Panc1 (cell line): ENCODE measurements at regions of chr5 and their contacts with region 1.

Region 1: DNA sequence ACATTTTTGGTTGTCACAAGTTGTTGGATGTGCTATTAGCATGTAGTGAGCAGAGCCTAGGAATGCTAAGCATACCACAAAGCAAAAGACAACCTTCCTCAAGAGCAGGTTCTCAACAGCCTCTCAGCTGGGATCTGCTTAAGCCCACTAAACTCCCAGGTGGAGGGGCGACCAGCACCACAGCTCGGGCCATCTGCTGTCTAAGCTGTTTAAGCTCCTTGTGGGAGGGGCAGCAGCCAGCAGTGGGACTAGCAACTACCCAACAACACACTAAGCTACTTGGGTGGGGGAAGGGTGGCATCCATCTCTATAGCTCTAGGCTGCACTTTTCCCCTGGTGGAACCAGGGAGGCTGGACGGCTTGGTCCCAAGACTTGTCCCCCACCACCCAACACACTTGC is 1052.7 kb upstream of the ARRDC3 start:
- DNase-seq: no peak
- ATAC-seq: no peak
- H3K4me3 ChIP-seq: no peak overlapping the region
- H3K27ac ChIP-seq: no peak overlapping the region
- H3K4me1 ChIP-seq: no peaks in the 10 kb centered on the region
- H3K27me3 ChIP-seq: no peaks in the 10 kb centered on the region
- CTCF ChIP-seq: no peak

Region 2: DNA sequence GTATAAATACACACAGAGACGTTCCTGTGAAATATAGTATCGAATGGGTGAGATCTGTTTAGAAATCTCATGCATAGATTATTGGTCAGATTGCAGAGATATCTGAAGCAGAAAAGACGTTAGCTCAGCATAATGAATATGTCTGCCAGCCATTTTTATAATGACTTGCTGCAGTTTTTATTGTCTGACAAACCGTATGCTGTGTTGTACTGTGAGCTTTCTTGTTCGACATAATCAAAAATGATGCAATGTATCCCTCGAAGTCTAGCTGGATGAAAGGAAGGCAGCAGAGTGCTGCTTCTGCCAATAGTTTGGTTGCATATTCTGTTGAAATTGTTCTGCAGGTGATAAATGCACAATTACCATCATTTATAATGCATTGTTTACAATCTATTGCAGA is 537.8 kb before region 1 on chr5:
- CTCF ChIA-PET with region 1: no interaction called
- POLR2A ChIA-PET with region 1: interaction called, 10 read pairs
- in situ Hi-C with region 1: no loop called
- intact Hi-C with region 1: no loop called
- DNase-seq: no peak
- ATAC-seq: no peak
- H3K4me3 ChIP-seq: no peak overlapping the region
- H3K27ac ChIP-seq: no peak overlapping the region; the same call in 1 of the 2 replicates
- H3K4me1 ChIP-seq: no peaks in the 10 kb centered on the region
- H3K27me3 ChIP-seq: no peaks in the 10 kb centered on the region
- CTCF ChIP-seq: no peak